Stomach (tissue), 19 donors: ENCODE measurements at regions of chr15 and their contacts with region 1.

Region 1: DNA sequence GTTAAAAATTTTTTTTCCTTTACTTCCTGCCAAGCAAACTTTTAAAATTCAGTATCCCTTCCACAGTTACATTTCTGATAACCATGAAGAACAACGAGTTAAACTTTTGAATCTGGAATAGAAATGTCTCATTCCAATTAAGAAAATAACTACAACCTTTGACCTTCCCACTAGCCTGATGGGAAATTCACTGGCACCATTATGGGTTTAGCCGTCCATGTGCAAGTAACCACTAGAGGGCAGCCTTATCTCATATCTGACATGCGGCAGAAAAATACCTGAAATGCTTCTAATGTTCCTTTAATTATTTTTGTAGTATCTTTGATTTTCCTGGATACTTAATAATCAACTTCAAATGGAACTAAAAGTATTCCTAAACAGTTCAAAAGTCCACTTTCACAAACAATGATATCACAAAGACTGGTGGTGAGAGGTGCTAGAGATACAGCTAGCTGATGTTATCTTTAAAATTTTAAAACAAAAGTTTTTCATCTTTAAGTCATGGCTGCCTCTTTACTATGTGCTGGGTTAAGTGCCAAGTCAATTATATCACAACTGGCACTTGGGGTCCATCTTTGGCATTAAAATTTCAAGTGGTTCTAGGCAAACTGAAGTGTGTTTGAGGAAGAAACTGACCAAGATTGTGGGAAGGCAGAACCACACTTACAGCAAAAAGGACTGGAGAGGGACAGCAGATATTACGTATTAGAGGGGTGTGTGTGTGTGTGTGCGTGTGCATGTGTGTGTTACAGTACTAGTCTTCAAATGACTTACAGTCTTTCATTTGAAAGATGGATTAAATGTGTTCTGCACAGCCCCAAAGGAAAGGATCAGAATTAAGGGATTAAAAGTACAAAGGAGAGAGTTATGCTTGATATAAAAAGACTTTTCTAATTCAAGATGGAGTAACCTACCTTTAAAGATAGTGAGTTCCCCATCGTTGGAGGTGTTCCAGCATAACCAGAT is 107.1 kb upstream of the ICE2 start:
- DNase-seq: peak; percentile 61 to 90
- H3K4me3 ChIP-seq: no peak overlapping the region
- H3K27ac ChIP-seq: no peak overlapping the region
- H3K4me1 ChIP-seq: peaks cover 0 to 53% (median 26%) of the 10 kb centered on the region in 4 donors
- H3K27me3 ChIP-seq: peaks cover 0 to 2% (median 0%) of the 10 kb centered on the region in 3 donors
- CTCF ChIP-seq: peak in 5 of 7 experiments; percentile 68 to 91 (median 83)
- EP300 ChIP-seq: no peak
- POLR2A ChIP-seq: no peak

Region 2: GRCh38 chr15:60464836-60465630 is 121.0 kb before region 1 on chr15:
- intact Hi-C with region 1: no loop called
- DNase-seq: no peak
- H3K4me3 ChIP-seq: no peak overlapping the region
- H3K27ac ChIP-seq: no peak overlapping the region
- H3K4me1 ChIP-seq: peaks cover 0 to 7% (median 3%) of the 10 kb centered on the region in 4 donors
- H3K27me3 ChIP-seq: no peaks in the 10 kb centered on the region
- CTCF ChIP-seq: no peak
- EP300 ChIP-seq: no peak
- POLR2A ChIP-seq: no peak

Region 3: GRCh38 chr15:60478566-60479360 is 107.3 kb before region 1 on chr15 and contains the start of gene ICE2:
- intact Hi-C with region 1: no loop called
- DNase-seq: peak; percentile 98 to 99
- H3K4me3 ChIP-seq: peak within 1 kb of the TSS; percentile 62 to 76 (median 74)
- H3K27ac ChIP-seq: peak within 1 kb of the TSS; percentile 94 to 96 (median 95)
- H3K4me1 ChIP-seq: peaks cover 21 to 58% (median 39%) of the 10 kb centered on the region in 4 donors
- H3K27me3 ChIP-seq: no peaks in the 10 kb centered on the region
- CTCF ChIP-seq: no peak
- EP300 ChIP-seq: no peak
- POLR2A ChIP-seq: peak in 2 of 4 donors; percentile 79 to 80
- total RNA-seq, gene ICE2: 17.4 to 127 (median 41.9) TPM

Region 4: DNA sequence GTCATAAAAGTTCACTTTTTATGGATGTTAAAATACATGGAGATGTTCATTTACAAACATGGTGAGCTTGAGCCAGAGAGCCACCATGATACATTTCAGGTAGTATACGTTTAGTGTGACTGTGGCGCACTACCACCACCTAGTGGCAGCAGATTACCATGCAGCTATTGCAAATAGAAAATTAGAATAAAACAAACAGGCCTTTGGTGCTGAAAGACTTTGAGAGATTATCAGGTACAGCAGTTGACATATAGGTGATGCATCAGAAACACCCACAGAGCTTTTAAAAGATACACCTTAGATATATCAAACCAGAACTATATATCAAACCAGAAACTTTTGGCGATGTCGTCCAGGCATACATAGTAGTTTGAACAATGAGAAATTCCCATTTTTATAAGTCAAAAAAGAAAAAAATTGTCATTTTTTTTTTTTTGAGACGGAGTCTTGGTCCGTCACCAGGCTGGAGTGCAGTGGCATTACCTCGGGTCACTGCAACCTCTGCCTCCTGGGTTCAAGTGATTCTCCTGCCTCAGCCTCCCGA is 65.1 kb before region 1 on chr15:
- intact Hi-C with region 1: no loop called
- DNase-seq: peak; percentile 82 to 91
- H3K4me3 ChIP-seq: no peak overlapping the region
- H3K27ac ChIP-seq: peak overlapping the region in 1 of 5 donors; percentile 34
- H3K4me1 ChIP-seq: peaks cover 0 to 29% (median 11%) of the 10 kb centered on the region in 4 donors
- H3K27me3 ChIP-seq: no peaks in the 10 kb centered on the region
- CTCF ChIP-seq: peak in 5 of 7 experiments; percentile 81 to 94 (median 88)
- EP300 ChIP-seq: no peak
- POLR2A ChIP-seq: no peak

Region 5: DNA sequence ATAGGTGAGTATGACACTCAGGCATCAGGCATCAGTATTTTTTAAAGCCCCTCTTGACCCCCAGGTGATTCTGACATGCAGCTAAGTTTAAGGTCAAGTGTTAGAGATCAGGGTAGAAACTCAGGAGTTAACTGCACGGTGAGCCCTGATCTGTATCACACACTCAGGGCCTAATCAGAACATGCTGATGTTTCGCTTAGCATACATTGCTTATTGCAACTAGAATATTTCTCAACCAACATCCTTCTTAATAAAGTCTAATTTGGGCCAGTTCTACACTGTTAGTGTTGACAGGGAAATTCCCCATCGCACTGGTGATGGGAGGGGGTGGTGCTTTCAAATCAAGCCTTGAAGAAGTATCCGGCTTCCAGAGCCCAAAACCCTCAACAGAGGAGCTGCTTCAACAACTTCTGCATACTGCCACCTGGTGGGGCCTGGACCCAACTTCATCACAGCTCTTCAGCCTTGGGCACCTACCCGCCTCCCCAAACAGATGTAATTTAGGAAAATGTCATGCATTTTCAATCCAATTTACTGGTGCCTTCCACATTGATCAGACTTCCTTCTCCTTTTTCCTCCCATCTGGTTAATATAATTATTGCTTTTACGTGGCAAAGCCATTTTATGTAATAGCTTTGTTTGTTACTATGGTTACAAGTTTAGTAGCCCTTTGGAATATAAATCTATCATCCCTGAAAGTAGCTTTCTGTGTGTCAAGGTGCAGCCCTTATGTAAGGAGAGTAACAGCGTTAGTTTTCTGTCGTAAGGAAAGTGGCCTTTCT is 330.8 kb after region 1 on chr15:
- intact Hi-C with region 1: loop called (anchors 10 kb)
- DNase-seq: peak; percentile 81 to 94
- H3K4me3 ChIP-seq: no peak overlapping the region
- H3K27ac ChIP-seq: peak overlapping the region; percentile 12 to 81 (median 73)
- H3K4me1 ChIP-seq: peaks cover 18 to 54% (median 34%) of the 10 kb centered on the region in 4 donors
- H3K27me3 ChIP-seq: no peaks in the 10 kb centered on the region
- CTCF ChIP-seq: peak in 5 of 7 experiments; percentile 67 to 90 (median 81)
- EP300 ChIP-seq: no peak
- POLR2A ChIP-seq: no peak

Region 6: DNA sequence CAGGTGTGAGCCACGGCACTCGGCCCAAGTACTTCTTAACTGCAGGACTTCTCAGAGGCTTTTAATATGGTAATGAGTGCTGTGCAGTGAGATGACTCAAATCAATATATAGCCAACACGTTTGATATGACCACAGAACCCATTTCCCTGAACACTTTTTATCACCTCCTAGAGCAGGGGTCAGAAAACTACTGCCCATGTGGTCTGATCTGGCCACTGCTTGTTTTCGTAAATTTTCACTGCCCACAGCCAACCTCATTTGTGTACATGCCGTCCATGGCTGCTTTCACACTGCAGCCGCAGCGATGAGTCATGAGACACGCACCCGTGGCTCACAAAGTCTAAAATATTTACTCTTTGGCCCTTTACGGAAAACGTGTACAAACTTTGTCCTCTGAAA is 463.9 kb after region 1 on chr15:
- intact Hi-C with region 1: loop called (anchors 10 kb)
- DNase-seq: peak; percentile 44 to 54
- H3K4me3 ChIP-seq: no peak overlapping the region
- H3K27ac ChIP-seq: no peak overlapping the region
- H3K4me1 ChIP-seq: peaks cover 6 to 19% (median 10%) of the 10 kb centered on the region in 4 donors
- H3K27me3 ChIP-seq: no peaks in the 10 kb centered on the region
- CTCF ChIP-seq: no peak
- EP300 ChIP-seq: no peak
- POLR2A ChIP-seq: no peak